ENCODE measurements at regions of chr14 and their contacts with region 1.

Region 1: DNA sequence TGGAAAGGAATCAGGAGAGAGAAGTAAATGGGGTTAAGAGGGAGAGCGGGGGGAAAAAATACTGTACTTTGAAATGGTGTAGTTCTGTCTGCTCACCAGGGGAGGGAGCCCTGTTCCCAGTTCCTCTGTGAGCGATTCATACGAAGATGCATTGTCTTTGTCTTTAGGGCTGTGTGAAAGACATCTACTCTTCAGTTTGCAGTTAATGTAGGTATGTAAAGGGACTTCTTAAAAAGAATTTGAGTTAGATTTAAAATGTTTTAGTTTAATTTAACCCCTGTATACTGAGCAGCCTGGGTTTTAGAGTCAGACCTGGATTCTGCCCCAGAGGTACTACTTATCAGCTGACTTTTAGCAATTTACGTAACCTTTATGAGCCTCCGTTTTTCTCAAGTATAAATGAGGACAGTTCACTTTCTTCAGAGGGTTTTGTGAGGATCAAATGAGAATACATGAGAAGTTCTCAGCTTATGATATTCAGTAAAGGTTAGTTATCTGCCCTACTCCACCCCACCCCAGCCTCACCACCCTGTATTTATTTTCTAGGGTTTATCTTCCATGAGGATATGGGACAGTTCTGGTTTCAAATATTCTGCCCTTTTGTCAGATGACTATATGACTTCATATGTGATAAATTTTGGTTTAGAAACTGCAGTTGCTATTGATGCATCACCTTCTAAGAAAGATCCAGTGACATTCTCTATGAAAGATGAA is 82.5 kb upstream of the EVL start:
- DNase-seq: peak in 4 of 5 donors; percentile 52 to 61 (median 53)
- H3K4me3 ChIP-seq: no peak overlapping the region
- H3K27ac ChIP-seq: no peak overlapping the region
- H3K4me1 ChIP-seq: no peaks in the 10 kb centered on the region
- H3K27me3 ChIP-seq: no peaks in the 10 kb centered on the region
- CTCF ChIP-seq: peak; percentile 76 to 85 (median 82)
- EP300 ChIP-seq: no peak
- POLR2A ChIP-seq: no peak

Region 2: DNA sequence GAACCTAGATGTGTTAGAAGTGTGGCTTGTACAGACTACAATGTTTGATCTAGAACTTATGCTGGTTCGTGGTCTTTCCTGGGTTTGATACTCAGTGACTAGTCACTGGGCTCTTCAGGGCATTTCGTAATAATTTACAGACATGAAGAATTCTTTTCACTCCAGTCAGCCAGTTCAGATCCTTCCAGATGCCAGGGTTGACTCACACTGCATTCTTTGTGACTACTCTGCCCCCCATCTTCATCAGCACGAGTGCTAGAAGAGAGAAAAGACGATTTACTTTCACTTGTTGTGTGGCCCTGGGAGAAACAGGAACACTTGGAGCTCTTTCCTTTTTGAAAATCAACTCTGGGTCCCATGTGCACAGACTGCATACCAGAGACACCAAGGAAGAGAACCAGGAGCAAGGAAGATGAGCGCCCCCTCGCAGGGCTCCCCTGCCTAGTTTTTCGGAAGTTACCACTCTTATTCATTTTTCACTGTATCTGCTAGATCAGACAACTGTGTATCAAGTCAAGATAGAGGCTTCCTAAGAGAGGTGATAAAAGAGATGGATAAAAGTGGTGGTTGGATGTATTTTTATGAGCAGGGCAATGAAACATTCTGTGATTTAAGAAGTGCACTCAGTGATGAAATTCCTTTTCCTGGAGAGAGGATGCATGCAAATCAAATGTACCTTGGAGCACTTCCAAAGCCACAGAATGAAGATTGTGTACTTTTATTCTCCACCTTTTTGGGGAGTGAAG is 49.0 kb after region 1 on chr14:
- intact Hi-C with region 1: no loop called
- DNase-seq: peak in 2 of 5 donors; percentile 26 to 62
- H3K4me3 ChIP-seq: peak overlapping the region; percentile 13
- H3K27ac ChIP-seq: no peak overlapping the region
- H3K4me1 ChIP-seq: peaks cover 16% of the 10 kb centered on the region
- H3K27me3 ChIP-seq: no peaks in the 10 kb centered on the region
- CTCF ChIP-seq: no peak
- EP300 ChIP-seq: no peak
- POLR2A ChIP-seq: no peak

Region 3: DNA sequence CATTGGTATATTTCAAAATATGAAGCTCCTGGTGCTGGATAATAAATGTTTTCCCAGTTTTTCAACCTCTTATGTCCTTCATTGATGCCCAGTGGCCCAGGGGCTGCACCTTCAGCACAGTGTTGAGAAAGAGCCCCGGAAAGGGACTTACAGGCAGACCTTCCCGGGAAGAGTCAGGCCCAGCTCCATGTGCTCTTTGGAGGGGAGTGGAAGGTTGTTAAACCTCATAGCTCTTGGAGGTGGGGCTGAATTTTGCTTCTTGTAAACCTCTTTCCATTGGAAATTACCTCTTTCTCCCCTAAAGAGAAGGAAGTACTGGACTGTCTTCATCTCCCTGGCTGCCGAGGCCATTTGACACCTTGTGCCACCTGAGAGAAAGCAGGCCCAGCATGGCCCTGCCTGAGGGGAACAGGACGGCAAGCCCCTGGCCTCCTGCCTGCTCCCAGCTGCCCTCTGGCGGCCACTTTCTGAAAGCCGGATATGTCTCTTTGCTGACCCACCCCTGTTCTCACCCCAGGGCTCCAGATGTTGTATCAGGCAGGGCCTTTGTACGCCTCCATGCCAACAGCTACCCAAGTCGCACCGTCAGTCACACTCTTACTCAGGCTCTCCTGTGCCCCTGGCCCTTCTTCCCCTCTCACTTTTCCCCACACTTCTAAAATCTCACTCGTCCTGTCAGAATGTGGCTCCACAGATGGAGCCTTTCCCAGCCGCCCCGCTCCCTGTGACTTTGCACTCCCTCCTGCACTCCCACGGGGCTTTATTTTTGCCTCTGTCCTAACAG is 125.5 kb after region 1 on chr14:
- intact Hi-C with region 1: loop called (anchors 2 to 10 kb)
- DNase-seq: peak; percentile 73 to 90 (median 87)
- H3K4me3 ChIP-seq: no peak overlapping the region
- H3K27ac ChIP-seq: no peak overlapping the region
- H3K4me1 ChIP-seq: peaks cover 30% of the 10 kb centered on the region
- H3K27me3 ChIP-seq: no peaks in the 10 kb centered on the region
- CTCF ChIP-seq: peak; percentile 74 to 85 (median 77)
- EP300 ChIP-seq: no peak
- POLR2A ChIP-seq: no peak

Region 4: GRCh38 chr14:100122481-100123222 is 140.0 kb after region 1 on chr14:
- intact Hi-C with region 1: loop called in 1 of 4 experiments (anchors 10 kb)
- DNase-seq: no peak
- H3K4me3 ChIP-seq: no peak overlapping the region
- H3K27ac ChIP-seq: no peak overlapping the region
- H3K4me1 ChIP-seq: no peaks in the 10 kb centered on the region
- H3K27me3 ChIP-seq: no peaks in the 10 kb centered on the region
- CTCF ChIP-seq: no peak
- EP300 ChIP-seq: no peak
- POLR2A ChIP-seq: no peak

Region 5: DNA sequence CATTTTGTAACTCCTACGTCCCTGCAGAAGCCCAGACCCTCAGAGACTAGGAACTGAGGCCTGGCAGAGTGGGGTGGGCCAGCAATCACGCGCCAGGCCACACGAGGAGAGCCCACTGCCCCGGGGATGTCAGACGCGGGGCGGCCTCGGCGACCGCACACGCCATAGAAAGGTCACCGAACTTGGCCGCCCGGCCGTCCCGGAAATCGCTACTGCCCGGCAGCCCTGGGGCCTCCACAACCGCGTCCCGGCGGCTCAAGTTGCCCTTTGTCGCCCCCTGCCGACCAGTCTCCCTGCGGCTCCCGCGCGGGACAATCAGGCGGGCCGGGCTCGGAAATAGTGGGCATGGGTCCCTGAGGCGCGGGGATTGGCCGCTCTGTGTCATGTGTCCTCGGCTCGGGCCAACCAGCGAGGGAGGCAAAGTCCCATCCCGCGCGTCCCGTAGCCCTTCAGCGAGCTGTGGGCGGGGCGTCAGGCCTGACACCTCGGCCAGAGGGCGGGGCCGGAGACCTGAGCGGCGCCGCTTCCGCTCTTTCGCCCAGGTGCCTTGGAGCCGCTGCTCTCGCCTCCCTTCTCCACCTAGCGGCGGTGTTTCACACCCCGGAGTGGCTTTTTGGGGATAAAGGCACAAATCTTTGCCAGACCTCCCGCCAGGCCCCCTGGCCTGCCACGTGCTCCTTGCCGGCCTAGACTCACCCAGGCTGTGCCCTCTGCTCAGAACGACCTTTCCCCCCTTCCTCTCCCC is 210.2 kb after region 1 on chr14:
- intact Hi-C with region 1: loop called (anchors 10 kb)
- DNase-seq: peak; percentile 99 to 100 (median 99)
- H3K4me3 ChIP-seq: peak overlapping the region; percentile 38
- H3K27ac ChIP-seq: peak overlapping the region; percentile 78 to 88
- H3K4me1 ChIP-seq: no peaks in the 10 kb centered on the region
- H3K27me3 ChIP-seq: no peaks in the 10 kb centered on the region
- CTCF ChIP-seq: peak; percentile 92 to 97 (median 93)
- EP300 ChIP-seq: no peak
- POLR2A ChIP-seq: peak; percentile 47

Region 6: GRCh38 chr14:100375963-100376735 is 393.5 kb after region 1 on chr14:
- intact Hi-C with region 1: loop called in 1 of 4 experiments (anchors 10 kb)
- DNase-seq: peak; percentile 94 to 96 (median 94)
- H3K4me3 ChIP-seq: peak within 1 kb of the TSS; percentile 72
- H3K27ac ChIP-seq: peak within 1 kb of the TSS; percentile 54 to 75
- H3K4me1 ChIP-seq: peaks cover 2% of the 10 kb centered on the region
- H3K27me3 ChIP-seq: no peaks in the 10 kb centered on the region
- CTCF ChIP-seq: peak in 1 of 3 donors; percentile 19
- EP300 ChIP-seq: no peak
- POLR2A ChIP-seq: peak; percentile 79